CD8-positive, alpha-beta T cell (primary cell): ENCODE measurements at regions of chr6 and their contacts with region 1.

Region 1: DNA sequence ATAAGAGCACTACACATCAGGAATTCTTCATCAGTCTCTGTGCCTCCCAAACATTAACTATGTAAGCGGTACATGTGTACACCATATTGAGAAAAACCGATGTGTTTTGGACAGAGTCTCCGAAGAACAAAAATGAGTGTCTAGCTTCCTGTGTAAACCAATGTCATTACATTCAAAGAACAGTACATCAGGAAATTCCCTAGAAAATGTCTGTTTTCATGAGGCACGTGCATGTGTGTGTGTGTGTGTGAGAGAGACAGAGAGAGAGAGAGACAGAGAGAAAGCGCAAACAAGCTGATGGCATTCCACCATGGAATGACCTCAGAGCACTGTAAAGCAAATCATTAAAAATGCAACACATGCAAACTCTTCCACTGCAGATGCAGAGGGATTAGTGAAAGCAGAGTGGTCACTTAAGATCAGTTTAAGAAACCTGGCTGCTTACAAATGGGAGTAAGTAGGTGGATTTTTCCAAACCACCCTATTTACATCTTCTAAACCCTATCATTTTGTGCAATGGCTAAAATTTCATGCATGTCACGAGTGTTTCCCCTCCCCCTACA is 133.9 kb downstream of the HIVEP2 start:
- DNase-seq: peak in 2 of 9 experiments; percentile 36 to 64
- ATAC-seq: peak; percentile 48
- H3K4me3 ChIP-seq: no peak overlapping the region
- H3K4me3 Mint-ChIP-seq: peak overlapping the region; percentile 0
- H3K27ac ChIP-seq: no peak overlapping the region
- H3K27ac Mint-ChIP-seq: peak overlapping the region; percentile 14
- H3K4me1 ChIP-seq: peaks cover 25% of the 10 kb centered on the region
- H3K4me1 Mint-ChIP-seq: peaks cover 81% of the 10 kb centered on the region
- H3K27me3 ChIP-seq: no peaks in the 10 kb centered on the region
- H3K27me3 Mint-ChIP-seq: no peaks in the 10 kb centered on the region
- CTCF ChIP-seq: no peak

Region 2: DNA sequence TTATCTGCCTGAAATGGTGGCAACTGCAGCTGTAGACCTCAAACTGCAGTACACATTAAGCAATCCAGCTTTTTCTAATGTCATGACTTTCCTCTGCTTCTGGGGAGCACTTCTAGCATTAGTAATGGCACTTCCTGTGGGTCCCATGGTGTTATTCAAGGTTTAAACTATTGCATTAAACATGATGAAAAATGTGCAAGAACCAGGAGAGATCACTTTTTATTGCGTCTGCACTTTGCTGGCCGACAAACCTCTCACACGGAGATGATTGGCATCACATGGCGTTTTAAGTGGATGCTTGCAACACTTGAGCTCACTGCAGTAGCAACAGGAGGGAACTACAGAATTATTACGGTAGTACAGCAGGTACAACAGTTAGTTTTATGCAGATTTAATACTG is 14.5 kb before region 1 on chr6:
- CTCF ChIA-PET with region 1: no interaction called
- POLR2A ChIA-PET with region 1: interaction called, 10 read pairs
- intact Hi-C with region 1: loop called in 1 of 2 experiments (anchors 2 kb)
- DNase-seq: no peak
- ATAC-seq: no peak
- H3K4me3 ChIP-seq: no peak overlapping the region
- H3K4me3 Mint-ChIP-seq: no peak overlapping the region
- H3K27ac ChIP-seq: no peak overlapping the region
- H3K27ac Mint-ChIP-seq: no peak overlapping the region
- H3K4me1 ChIP-seq: peaks cover 14% of the 10 kb centered on the region
- H3K4me1 Mint-ChIP-seq: peaks cover 73% of the 10 kb centered on the region
- H3K27me3 ChIP-seq: no peaks in the 10 kb centered on the region
- H3K27me3 Mint-ChIP-seq: no peaks in the 10 kb centered on the region
- CTCF ChIP-seq: no peak

Region 3: DNA sequence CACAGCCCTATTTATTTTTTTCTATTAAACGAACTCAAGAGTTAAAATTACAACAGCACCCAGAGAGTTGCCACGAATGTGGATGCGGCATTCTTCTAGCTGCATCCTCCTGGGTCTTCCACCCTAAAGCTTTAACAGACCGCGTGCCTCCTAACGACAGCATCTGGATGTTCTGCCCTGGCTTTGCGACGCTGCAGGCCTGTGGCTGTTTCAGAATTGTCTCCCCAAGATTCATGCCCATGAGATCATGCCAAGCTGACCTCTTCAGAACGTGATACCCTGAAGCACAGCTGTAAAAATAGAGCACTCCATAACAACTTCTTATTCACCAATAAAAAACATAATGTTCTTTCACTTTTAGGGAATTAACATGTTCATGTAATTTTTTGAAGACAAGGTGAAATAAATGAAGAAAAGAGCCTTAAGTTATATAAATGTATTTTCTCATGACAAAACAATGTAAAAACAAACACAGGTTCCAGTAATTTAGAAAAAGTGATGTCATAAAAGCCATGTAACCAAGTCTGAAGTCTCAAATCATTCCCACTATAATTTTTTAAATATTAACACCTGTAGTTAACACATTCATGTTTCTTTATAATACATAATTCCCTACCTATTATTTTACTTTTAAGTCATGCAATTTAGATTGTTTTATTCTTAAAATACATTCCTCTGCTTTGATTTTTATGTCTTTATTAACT is 107.5 kb after region 1 on chr6:
- CTCF ChIA-PET with region 1: no interaction called
- POLR2A ChIA-PET with region 1: no interaction called
- intact Hi-C with region 1: no loop called
- DNase-seq: no peak
- ATAC-seq: no peak
- H3K4me3 ChIP-seq: no peak overlapping the region
- H3K4me3 Mint-ChIP-seq: no peak overlapping the region
- H3K27ac ChIP-seq: no peak overlapping the region
- H3K27ac Mint-ChIP-seq: peak overlapping the region; percentile 58
- H3K4me1 ChIP-seq: peaks cover 43% of the 10 kb centered on the region
- H3K4me1 Mint-ChIP-seq: peaks cover 69% of the 10 kb centered on the region
- H3K27me3 ChIP-seq: no peaks in the 10 kb centered on the region
- H3K27me3 Mint-ChIP-seq: no peaks in the 10 kb centered on the region
- CTCF ChIP-seq: no peak